AG04450 (cell line): ENCODE measurements at regions of chr6 and their contacts with region 1.

Region 1: GRCh38 chr6:155188707-155189496 is 74.9 kb upstream of the CLDN20 start:
- DNase-seq: peak; percentile 96
- H3K4me3 ChIP-seq: no peak overlapping the region; the same call in 1 of the 2 replicates
- H3K27ac ChIP-seq: peak overlapping the region; percentile 77
- H3K27me3 ChIP-seq: no peaks in the 10 kb centered on the region
- CTCF ChIP-seq: no peak

Region 2: DNA sequence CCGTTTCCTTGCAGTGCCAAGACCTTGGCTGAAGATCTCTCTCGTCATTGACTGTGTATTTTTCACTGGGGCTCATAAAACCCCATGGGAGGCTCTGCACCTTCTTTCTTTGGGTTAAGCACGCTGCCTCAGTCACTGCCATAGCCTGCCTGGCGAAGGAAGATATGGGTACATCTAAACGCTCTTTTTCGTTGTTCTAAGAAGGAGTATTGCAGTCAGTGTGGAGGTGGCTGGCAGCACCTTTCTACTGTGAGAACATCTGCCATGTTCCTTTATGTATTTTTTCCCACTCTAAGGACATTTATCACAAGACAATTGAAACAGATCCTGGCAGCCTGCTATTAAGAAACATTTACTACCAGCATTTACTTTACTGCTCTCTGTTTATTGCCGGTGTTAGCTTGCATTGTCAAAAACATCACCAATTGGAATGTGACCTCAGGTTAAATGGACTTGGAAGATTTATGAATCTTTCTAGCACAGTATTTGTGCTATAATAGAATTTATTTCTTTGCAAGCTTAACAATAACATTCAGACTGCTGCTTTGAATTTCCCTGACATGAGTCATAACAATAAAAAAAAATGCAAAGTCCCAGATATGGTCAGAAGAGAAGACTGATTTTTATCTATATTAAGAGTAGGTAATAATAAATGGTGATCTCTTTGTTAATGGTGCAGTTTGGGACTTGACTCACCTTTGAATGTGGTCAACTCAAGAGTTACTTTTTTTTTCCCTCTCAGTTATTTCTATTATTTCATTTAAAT is 12.7 kb after region 1 on chr6:
- CTCF ChIA-PET with region 1: interaction called, 3 read pairs
- POLR2A ChIA-PET with region 1: interaction called, 12 read pairs
- DNase-seq: peak; percentile 49
- H3K4me3 ChIP-seq: no peak overlapping the region
- H3K27ac ChIP-seq: peak overlapping the region; percentile 40
- H3K27me3 ChIP-seq: no peaks in the 10 kb centered on the region
- CTCF ChIP-seq: no peak